HEK293T (cell line): ENCODE measurements at regions of chr5 and their contacts with region 1.

Region 1: GRCh38 chr5:126471875-126472537 is 48.8 kb downstream of the GRAMD2B start:
- DNase-seq: no peak

Region 2: GRCh38 chr5:126499853-126500342 is 27.9 kb after region 1 on chr5:
- CTCF ChIA-PET with region 1: interaction called, 10 read pairs
- POLR2A ChIA-PET with region 1: no interaction called
- DNase-seq: peak; percentile 39